GM10248 (cell line): ENCODE measurements at regions of chr17 and their contacts with region 1.

Region 1: DNA sequence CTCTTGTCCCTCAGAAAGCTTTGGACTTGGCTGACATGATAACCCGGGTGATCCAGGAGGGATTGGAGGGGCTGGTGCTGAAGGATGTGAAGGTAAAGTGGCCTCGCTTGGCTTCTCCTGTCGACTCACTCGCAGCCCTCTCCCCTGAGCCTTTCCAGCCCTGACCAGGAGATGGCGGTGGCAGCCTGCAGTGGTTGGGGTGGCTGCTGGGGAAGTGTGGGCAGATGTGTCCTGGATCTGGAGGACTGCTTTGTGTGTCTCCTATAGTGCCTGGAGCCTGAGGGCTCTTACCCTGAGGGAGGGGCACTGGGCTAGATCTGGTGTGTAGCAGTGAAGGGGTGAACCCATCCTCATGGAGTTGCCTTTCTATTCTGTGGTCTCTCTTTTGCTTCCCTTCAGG is 17.9 kb downstream of the LIG3 start:
- DNase-seq: peak; percentile 90
- CTCF ChIP-seq: peak; percentile 93

Region 2: DNA sequence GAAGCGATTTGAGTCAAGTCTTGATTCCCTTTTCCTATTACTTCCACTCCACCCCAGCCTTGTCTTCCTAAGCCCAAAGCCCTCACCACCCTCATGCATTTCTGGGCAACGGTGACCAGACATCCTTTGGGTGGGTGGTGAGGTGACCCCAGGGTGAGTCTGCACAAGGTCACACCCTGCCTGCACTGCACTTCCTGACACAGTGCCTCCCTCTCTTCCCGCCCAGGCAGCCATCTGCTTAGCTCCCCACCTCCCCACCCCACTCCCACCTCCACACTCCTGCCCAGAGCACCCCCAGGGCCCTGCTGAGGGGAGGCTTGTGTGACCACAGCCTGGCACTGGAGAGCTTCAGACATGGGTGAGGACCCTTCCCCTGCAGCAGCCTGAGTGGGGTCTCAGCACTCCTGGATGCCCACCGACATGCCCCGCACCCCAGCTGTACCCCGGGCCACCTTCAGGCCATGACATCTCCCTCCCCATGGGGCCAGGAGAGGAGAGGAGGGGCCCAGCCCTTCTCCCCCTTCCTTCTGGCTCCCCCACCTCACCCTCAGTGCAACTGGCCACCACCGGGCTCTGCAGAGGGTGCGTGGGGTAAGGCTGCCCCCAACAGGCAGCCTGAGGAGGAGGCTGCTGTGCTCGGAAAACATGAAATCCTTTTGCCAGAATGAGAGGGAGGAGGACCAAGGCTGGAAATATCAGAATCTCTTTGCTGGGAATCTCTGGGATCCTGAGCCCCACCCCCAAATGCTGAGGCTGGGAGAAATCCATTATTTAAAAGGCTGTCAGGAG is 105.5 kb before region 1 on chr17:
- CTCF ChIA-PET with region 1: no interaction called
- POLR2A ChIA-PET with region 1: no interaction called
- DNase-seq: no peak
- CTCF ChIP-seq: peak; percentile 28

Region 3: DNA sequence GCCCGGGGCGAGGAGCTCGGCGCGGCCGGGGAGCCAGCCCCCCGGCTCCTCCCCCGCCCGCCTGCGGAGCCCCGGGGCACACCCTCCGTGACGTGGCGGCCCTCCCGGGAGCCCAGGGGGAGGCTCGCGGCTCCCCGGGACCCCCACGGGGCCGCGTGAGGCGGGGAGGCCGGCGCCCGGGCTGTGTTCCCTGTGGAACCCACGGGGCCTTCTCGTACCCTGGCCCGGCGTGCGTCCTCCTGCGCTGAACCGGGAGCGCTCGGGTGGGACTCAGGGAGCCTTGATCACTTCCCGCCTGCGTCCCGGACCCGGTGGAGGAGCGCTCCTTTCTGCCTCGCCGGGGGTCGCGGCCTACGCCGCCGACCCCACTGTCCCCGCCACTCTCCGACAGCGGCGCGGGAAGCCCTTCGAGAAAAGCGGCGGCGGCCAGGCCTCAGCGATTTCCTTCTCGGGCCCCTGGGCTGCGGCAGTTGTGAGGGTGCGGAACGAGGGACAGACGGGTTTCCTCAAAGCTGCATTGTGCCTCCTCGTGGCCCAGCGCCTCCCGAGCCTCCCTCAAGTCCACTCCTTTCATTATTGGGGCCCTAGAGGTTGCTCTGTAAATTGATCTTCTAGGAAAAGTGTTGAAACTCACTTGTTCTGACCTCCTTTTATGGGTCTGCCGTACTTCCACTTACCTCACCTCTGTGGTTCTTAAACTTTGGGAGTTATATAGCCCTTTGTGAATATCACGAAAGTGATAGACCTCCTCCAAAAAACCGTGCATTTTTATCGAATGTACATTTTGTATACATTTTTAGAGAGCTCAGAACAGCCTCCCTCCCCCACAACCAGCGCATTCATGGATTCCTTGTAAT is 17.3 kb before region 1 on chr17:
- CTCF ChIA-PET with region 1: interaction called, 14 read pairs
- POLR2A ChIA-PET with region 1: interaction called, 4 read pairs
- DNase-seq: peak; percentile 93
- CTCF ChIP-seq: peak; percentile 69

Region 4: DNA sequence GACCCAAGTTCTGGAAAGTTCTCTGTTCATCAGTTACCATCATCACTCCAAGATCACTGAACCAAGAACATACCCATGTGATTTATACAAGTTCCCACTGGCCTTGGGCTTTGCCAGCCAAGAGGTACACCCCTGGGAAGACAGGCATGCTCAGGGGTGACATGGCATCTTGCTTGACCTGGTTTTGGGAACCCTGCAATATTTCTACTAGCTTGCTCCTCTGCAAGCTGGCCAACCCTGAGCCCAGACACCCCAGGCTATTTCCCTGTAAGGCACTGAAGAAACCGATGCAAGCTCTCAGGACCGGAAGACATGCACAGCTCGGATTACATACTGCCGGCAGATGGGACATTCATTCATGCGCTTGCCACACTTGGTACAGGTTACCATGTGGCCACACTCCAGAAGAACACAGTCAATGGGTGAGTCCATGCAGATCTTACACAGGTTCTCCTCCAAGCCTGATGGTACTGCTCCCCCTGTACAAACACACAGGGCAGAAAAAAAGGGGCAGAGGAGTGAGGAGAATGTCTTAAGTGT is 13.5 kb after region 1 on chr17:
- CTCF ChIA-PET with region 1: interaction called, 11 read pairs
- POLR2A ChIA-PET with region 1: no interaction called
- DNase-seq: no peak
- CTCF ChIP-seq: no peak

Region 5: GRCh38 chr17:35322749-35323148 is 324.5 kb after region 1 on chr17:
- CTCF ChIA-PET with region 1: no interaction called
- POLR2A ChIA-PET with region 1: no interaction called
- DNase-seq: no peak
- CTCF ChIP-seq: no peak

Region 6: GRCh38 chr17:35617505-35617904 is 619.3 kb after region 1 on chr17:
- CTCF ChIA-PET with region 1: no interaction called
- POLR2A ChIA-PET with region 1: no interaction called
- DNase-seq: no peak
- CTCF ChIP-seq: no peak

Region 7: GRCh38 chr17:35726127-35726952 is 728.1 kb after region 1 on chr17:
- CTCF ChIA-PET with region 1: no interaction called
- POLR2A ChIA-PET with region 1: interaction called, 12 read pairs
- DNase-seq: no peak
- CTCF ChIP-seq: no peak